Body of pancreas (tissue), 4 donors: ENCODE measurements at regions of chr3 and their contacts with region 1.

Region 1: GRCh38 chr3:123652346-123652984 is 67.6 kb upstream of the HACD2 start:
- DNase-seq: peak; percentile 73 to 81 (median 76)
- ATAC-seq: peak; percentile 84
- H3K4me3 ChIP-seq: no peak overlapping the region
- H3K27ac ChIP-seq: no peak overlapping the region
- H3K4me1 ChIP-seq: no peaks in the 10 kb centered on the region
- H3K27me3 ChIP-seq: no peaks in the 10 kb centered on the region
- CTCF ChIP-seq: peak; percentile 75 to 90 (median 87)
- POLR2A ChIP-seq: no peak

Region 2: DNA sequence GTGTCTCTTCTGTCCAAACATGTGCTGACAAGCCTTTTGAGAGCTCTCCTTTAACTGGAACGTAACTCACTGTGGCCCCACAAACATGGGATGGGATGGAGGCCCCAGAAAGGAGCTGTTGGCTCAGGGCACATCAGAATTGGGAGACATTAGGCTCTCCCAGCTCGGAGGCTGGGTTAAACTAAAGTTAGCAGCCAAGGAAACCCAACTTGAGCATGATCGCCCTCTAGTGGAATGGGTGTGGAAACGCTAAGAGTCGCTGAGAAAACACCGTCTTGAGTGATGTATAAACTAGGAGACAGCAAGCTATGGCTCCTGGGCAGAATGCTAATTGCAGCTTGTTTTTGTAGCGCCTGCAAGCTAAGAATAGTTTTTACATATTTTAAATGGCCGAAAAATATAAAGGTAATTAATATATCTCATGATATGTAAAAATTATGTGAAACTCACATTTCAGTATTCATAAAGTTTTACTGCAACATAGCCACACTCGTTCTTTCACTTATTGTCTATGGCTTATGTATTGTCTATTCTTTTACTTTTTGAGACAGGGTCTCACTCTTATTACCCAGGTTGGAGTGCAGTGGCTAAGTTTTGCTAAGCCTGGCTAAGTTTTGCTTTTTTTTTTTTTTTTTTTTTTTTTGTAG is 71.2 kb after region 1 on chr3:
- intact Hi-C with region 1: loop called (anchors 5 kb)
- DNase-seq: peak; percentile 46 to 64 (median 56)
- ATAC-seq: peak; percentile 73
- H3K4me3 ChIP-seq: no peak overlapping the region
- H3K27ac ChIP-seq: no peak overlapping the region
- H3K4me1 ChIP-seq: peaks cover 9% of the 10 kb centered on the region
- H3K27me3 ChIP-seq: no peaks in the 10 kb centered on the region
- CTCF ChIP-seq: peak; percentile 61 to 81 (median 72)
- POLR2A ChIP-seq: no peak